Colonic mucosa (tissue), 4 donors: ENCODE measurements at regions of chr13 and their contacts with region 1.

Region 1: DNA sequence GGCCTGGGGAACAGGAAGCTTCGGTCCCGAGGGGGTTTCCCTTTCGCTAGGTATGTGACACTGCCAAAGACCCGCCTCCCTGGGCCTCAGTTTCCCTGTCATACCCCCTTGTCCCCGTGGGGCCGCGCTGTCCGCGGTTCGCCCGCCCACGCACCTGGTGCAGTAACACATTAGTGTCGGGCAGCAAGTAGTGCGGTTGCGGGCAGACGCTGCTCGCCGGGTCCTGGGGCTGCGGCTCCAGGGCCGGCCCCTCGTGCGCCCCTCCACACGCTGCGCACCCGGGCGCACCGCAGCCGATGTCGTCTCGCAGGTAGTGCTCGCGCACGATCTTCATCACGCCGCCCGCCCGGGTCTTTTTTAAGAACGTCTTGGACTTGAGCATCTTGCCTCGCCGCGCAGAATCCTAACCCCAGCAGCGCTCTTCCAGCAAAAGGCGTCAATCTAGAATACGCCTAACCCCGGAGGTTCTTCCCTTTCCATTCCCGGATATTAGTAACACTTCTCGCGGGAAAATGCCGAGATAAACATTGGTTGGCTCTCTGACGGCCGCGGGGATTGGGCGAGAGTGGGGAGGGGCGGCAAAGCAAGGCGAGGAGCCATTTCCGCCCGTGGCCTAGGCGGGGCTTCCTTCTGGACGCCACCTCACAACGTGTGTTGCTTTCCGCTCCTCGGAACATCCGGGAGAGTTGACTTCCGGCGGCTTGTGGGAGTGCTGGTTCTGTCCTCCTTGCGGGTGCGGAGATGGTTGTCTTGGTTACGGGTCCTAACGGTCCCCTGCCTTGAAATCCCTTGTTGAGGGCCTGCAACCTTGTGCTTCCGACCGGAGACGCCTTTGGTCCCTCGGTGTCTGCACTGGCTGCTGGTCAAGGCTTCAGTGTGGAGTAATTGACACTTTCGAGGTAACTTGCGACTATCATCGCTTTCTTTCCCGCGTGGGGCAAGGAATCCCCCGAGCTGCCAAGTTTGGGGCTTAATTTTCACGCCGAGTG is at the starts of genes DIS3 and PIBF1:
- DNase-seq: peak; percentile 99
- H3K4me3 ChIP-seq: peak within 1 kb of the TSS; percentile 99
- H3K27ac ChIP-seq: peak within 1 kb of the TSS; percentile 91
- H3K4me1 ChIP-seq: no peaks in the 10 kb centered on the region
- H3K27me3 ChIP-seq: no peaks in the 10 kb centered on the region
- CTCF ChIP-seq: no peak
- total RNA-seq, gene DIS3: 25.0 to 27.4 TPM
- total RNA-seq, gene PIBF1: 12.3 to 17.5 TPM

Region 2: GRCh38 chr13:72727417-72728289 is 54.1 kb before region 1 on chr13 and contains the starts of genes BORA and MZT1:
- intact Hi-C with region 1: loop called (anchors 5 kb)
- DNase-seq: peak; percentile 96
- H3K4me3 ChIP-seq: peak within 1 kb of the TSS; percentile 87
- H3K27ac ChIP-seq: peak within 1 kb of the TSS; percentile 49
- H3K4me1 ChIP-seq: peaks cover 5% of the 10 kb centered on the region
- H3K27me3 ChIP-seq: no peaks in the 10 kb centered on the region
- CTCF ChIP-seq: no peak
- total RNA-seq, gene BORA: 10.1 to 11.6 TPM
- total RNA-seq, gene MZT1: 9.4 to 11.7 TPM